Activated naive CD4-positive, alpha-beta T cell treated with anti-CD3 and anti-CD28 coated beads, Interleukin-2, amount 10 ng/mL, durations not matched to agents 7 days and 5 days (primary cell): ENCODE measurements at regions of chr12 and their contacts with region 1.

Region 1: DNA sequence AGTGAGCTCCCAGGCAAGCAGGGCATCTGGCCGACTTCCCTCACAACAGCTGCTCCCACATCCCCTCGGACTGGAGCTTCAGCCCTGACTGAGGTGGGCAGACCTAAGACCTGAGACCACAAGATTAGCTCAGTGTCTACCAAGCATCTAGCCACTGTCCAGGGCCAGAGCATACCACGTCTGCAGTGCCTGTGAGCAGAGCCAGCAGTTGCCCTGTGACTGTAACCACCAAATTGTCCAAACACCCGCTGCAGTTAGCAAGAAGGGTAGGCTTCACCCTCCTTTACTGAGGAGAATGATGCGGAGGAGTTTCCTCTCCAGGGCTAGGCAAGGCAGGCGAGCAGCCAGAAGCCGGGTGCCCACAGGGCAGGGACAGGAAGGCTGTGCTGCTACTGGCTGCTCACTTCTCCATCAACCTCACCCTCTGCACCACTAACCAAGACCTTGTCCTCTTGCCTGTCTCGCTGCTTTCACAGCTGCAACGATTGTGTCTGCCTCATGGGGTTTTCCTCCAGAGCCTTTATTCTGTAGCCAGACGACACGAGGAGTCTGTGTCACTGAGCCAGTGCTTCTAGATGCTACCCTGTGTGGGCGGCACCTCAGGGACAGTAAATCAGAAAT is 53.9 kb downstream of the ANAPC7 start:
- DNase-seq: peak; percentile 59
- H3K4me3 Mint-ChIP-seq: peak overlapping the region; percentile 14
- H3K27ac Mint-ChIP-seq: peak overlapping the region; percentile 85
- H3K4me1 Mint-ChIP-seq: peaks cover 44% of the 10 kb centered on the region
- H3K27me3 Mint-ChIP-seq: no peaks in the 10 kb centered on the region

Region 2: DNA sequence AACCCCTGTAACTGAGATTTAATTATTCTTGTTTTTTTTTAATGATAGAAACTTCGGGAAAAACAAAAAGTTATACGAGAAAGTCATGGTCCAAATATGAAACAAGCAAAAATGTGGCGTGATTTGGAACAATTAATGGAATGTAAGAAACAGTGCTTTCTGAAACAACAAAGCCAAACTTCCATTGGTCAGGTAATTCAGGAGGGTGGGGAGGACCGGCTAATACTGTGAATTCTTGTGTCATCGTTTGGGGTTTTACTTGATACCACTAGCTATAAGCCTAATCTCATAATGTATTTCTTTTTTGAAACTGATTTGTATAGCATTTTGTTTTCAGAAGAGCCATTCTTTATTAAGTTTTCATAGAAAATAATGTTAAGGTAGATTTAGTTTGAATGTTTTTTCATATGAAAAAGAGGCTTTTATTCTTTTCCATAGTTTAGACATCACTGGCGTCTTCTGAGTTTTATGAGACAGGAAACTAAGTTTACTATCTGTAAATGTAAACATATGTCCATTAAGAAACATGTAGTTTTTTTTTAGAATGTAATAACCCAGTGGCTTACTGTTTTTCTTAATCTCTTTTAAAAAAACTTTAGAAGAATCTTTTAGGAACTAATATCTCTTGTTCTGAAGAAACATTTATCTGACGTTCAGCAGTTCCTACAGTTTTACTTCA is 131.5 kb before region 1 on chr12:
- CTCF ChIA-PET with region 1: no interaction called
- DNase-seq: no peak
- H3K4me3 Mint-ChIP-seq: no peak overlapping the region
- H3K27ac Mint-ChIP-seq: no peak overlapping the region
- H3K4me1 Mint-ChIP-seq: no peaks in the 10 kb centered on the region
- H3K27me3 Mint-ChIP-seq: no peaks in the 10 kb centered on the region

Region 3: GRCh38 chr12:110431957-110432587 is 82.4 kb after region 1 on chr12:
- CTCF ChIA-PET with region 1: interaction called, 18 read pairs
- DNase-seq: no peak
- H3K4me3 Mint-ChIP-seq: no peak overlapping the region
- H3K27ac Mint-ChIP-seq: peak overlapping the region; percentile 78
- H3K4me1 Mint-ChIP-seq: peaks cover 5% of the 10 kb centered on the region
- H3K27me3 Mint-ChIP-seq: peaks cover 6% of the 10 kb centered on the region